B cell (primary cell): ENCODE measurements at regions of chr19 and their contacts with region 1.

Region 1: GRCh38 chr19:49640113-49640898 is at the start of gene RRAS:
- DNase-seq: peak; percentile 100
- ATAC-seq: peak; percentile 69
- H3K4me3 ChIP-seq: peak within 1 kb of the TSS; percentile 35 to 97 (median 80)
- H3K4me3 Mint-ChIP-seq: peak within 1 kb of the TSS; percentile 95
- H3K27ac ChIP-seq: peak within 1 kb of the TSS; percentile 91 to 96
- H3K27ac Mint-ChIP-seq: peak within 1 kb of the TSS; percentile 95
- H3K4me1 ChIP-seq: peaks cover 37 to 55% of the 10 kb centered on the region in 2 donors
- H3K4me1 Mint-ChIP-seq: peaks cover 53% of the 10 kb centered on the region
- H3K27me3 ChIP-seq: no peaks in the 10 kb centered on the region
- H3K27me3 Mint-ChIP-seq: no peaks in the 10 kb centered on the region
- CTCF ChIP-seq: no peak
- total RNA-seq, gene RRAS: 5.6 and 6.3 TPM in 2 replicates

Region 2: GRCh38 chr19:49580264-49581006 is 59.9 kb before region 1 on chr19 and contains the start of gene NOSIP:
- CTCF ChIA-PET with region 1: interaction called, 3 read pairs
- POLR2A ChIA-PET with region 1: interaction called, 9 read pairs
- intact Hi-C with region 1: loop called (anchors 1 kb)
- DNase-seq: peak; percentile 97
- ATAC-seq: peak; percentile 95
- H3K4me3 ChIP-seq: peak within 1 kb of the TSS; percentile 61 to 92 (median 87)
- H3K4me3 Mint-ChIP-seq: peak within 1 kb of the TSS; percentile 89
- H3K27ac ChIP-seq: peak within 1 kb of the TSS; percentile 5 to 74
- H3K27ac Mint-ChIP-seq: peak within 1 kb of the TSS; percentile 88
- H3K4me1 ChIP-seq: peaks cover 16 to 23% of the 10 kb centered on the region in 2 donors
- H3K4me1 Mint-ChIP-seq: peaks cover 29% of the 10 kb centered on the region
- H3K27me3 ChIP-seq: no peaks in the 10 kb centered on the region
- H3K27me3 Mint-ChIP-seq: no peaks in the 10 kb centered on the region
- CTCF ChIP-seq: no peak
- total RNA-seq, gene NOSIP: 55.5 and 65.2 TPM in 2 replicates

Region 3: DNA sequence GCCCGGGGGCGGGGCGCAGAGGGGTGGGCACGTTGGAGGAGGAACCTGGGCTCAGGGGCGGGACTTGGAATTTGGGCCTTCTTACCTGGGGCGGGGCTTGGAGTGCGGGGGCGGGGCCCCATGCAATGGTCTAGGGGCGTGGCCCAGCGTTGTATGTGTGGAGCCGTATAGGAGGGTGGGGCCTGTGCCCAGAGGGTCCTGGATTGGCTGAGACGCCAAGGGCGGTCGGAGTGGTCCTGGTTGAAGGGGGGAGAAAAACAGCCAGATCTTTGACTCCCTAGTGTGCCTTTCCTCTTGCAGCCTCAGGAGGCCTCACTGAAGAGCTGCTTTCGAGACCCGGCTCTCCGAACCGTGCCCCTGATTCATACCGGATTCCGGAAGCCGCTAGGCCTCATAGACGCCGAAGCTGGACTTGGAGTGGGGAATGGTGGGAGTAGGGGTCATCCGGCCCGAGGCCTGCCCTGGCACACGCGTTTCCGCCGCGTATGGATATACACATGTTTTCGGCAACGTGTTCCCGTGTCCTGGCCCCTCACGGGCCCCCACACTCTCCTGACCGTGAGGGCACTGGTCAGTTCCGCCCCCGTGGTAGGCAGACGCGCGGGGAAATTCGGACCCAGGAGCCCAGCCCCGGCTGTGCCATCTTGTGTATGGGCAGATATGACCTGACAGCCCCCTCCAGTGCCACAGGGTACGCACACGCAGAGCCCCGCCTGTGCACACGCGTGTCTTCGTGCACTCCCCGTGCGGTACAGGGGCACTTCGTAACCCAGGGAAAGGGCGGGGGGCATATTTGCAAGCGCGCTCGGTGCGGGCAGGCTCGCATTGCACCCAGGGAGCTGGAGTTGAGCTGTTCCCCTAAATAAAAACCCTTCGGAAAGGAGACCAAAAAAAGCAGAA is 50.0 kb before region 1 on chr19:
- CTCF ChIA-PET with region 1: interaction called, 6 read pairs
- POLR2A ChIA-PET with region 1: interaction called, 28 read pairs
- intact Hi-C with region 1: loop called (anchors 1 kb)
- DNase-seq: peak; percentile 97
- ATAC-seq: peak; percentile 80
- H3K4me3 ChIP-seq: peak overlapping the region; percentile 69 to 85 (median 77)
- H3K4me3 Mint-ChIP-seq: peak overlapping the region; percentile 84
- H3K27ac ChIP-seq: peak overlapping the region; percentile 72 to 85
- H3K27ac Mint-ChIP-seq: peak overlapping the region; percentile 91
- H3K4me1 ChIP-seq: peaks cover 16 to 26% of the 10 kb centered on the region in 2 donors
- H3K4me1 Mint-ChIP-seq: peaks cover 27% of the 10 kb centered on the region
- H3K27me3 ChIP-seq: no peaks in the 10 kb centered on the region
- H3K27me3 Mint-ChIP-seq: no peaks in the 10 kb centered on the region
- CTCF ChIP-seq: peak; percentile 13

Region 4: DNA sequence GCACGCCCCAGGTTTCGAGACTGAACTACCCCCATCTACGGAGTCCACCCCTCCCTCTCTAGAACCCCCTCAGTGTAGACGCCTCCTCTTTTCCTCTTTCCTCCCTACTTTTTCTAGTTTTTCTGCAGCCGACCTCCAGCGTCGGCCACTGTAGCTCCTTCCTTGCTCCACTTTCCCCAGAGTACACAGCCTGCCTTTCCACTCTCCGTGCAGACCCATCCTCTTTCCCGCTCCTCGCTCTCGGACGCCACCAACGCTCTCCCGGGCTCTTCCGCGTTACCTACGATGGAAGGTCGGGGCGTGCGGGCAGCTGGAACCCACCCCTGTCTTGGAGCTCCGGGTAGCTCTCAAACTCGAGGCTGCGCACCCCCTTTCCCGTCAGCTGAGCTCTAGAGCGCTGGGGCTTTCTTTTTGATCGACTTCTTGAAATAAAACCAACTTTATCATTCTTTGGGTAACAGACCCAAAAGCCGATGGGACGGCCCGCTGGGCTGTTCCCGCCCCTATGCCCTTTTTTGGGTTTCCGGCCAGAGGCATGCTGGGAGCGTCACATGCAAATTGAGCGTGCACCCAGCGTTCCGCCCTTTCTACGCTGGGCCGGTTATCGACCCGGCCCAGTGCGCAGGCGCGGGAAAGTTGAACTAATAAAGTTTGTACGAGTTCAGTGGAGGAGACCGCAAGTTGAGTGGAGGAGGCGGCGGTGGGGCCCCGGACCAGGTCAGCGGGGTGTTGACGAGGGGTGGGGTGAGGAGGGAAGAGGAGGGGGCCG is 25.2 kb after region 1 on chr19 and contains the starts of genes BCL2L12 and IRF3:
- CTCF ChIA-PET with region 1: interaction called, 8 read pairs
- POLR2A ChIA-PET with region 1: interaction called, 19 read pairs
- intact Hi-C with region 1: loop called (anchors 1 kb)
- DNase-seq: peak; percentile 98
- ATAC-seq: peak; percentile 83
- H3K4me3 ChIP-seq: peak within 1 kb of the TSS; percentile 71 to 99 (median 94)
- H3K4me3 Mint-ChIP-seq: peak within 1 kb of the TSS; percentile 95
- H3K27ac ChIP-seq: peak within 1 kb of the TSS; percentile 62 to 73
- H3K27ac Mint-ChIP-seq: peak within 1 kb of the TSS; percentile 94
- H3K4me1 ChIP-seq: peaks cover 16 to 30% of the 10 kb centered on the region in 2 donors
- H3K4me1 Mint-ChIP-seq: peaks cover 37% of the 10 kb centered on the region
- H3K27me3 ChIP-seq: no peaks in the 10 kb centered on the region
- H3K27me3 Mint-ChIP-seq: no peaks in the 10 kb centered on the region
- CTCF ChIP-seq: no peak
- total RNA-seq, gene BCL2L12: 17.3 and 22.1 TPM in 2 replicates
- total RNA-seq, gene IRF3: 233 and 251 TPM in 2 replicates

Region 5: GRCh38 chr19:49869441-49870176 is 229.3 kb after region 1 on chr19:
- CTCF ChIA-PET with region 1: no interaction called
- POLR2A ChIA-PET with region 1: interaction called, 3 read pairs
- intact Hi-C with region 1: loop called (anchors 2 kb)
- DNase-seq: peak; percentile 97
- ATAC-seq: peak; percentile 80
- H3K4me3 ChIP-seq: peak overlapping the region; percentile 42 to 74 (median 69)
- H3K4me3 Mint-ChIP-seq: no peak overlapping the region
- H3K27ac ChIP-seq: peak overlapping the region; percentile 97 to 98
- H3K27ac Mint-ChIP-seq: peak overlapping the region; percentile 77
- H3K4me1 ChIP-seq: peaks cover 30 to 50% of the 10 kb centered on the region in 2 donors
- H3K4me1 Mint-ChIP-seq: peaks cover 42% of the 10 kb centered on the region
- H3K27me3 ChIP-seq: no peaks in the 10 kb centered on the region
- H3K27me3 Mint-ChIP-seq: no peaks in the 10 kb centered on the region
- CTCF ChIP-seq: no peak